Endothelial cell of umbilical vein (primary cell): ENCODE measurements at regions of chr3 and their contacts with region 1.

Region 1: DNA sequence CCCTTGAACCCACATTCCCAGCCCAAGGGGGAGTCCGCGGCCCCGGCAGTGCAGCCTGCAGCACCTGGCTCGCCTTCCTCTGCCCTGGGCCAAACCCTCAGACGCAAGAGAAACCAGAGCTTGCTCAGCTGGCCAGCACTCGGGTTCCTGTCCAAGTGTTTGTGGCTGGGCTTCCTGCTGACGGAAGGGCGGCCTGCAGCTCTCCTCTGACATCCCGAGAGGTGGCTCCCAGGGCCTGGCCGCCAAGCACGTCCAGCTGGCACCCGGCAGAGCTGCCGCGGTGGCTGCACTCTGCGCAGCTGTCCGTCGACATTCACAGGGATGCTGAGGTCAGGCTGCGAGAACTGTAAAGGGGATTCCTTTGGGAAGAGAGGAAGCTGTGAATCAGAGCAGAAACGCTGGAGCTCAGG is 85.6 kb downstream of the CPN2 start:
- DNase-seq: peak; percentile 99
- H3K4me3 ChIP-seq: no peak overlapping the region
- H3K27ac ChIP-seq: peak overlapping the region; percentile 97
- H3K4me1 ChIP-seq: peaks cover 39% of the 10 kb centered on the region
- H3K27me3 ChIP-seq: no peaks in the 10 kb centered on the region
- CTCF ChIP-seq: no peak
- POLR2A ChIP-seq: no peak

Region 2: DNA sequence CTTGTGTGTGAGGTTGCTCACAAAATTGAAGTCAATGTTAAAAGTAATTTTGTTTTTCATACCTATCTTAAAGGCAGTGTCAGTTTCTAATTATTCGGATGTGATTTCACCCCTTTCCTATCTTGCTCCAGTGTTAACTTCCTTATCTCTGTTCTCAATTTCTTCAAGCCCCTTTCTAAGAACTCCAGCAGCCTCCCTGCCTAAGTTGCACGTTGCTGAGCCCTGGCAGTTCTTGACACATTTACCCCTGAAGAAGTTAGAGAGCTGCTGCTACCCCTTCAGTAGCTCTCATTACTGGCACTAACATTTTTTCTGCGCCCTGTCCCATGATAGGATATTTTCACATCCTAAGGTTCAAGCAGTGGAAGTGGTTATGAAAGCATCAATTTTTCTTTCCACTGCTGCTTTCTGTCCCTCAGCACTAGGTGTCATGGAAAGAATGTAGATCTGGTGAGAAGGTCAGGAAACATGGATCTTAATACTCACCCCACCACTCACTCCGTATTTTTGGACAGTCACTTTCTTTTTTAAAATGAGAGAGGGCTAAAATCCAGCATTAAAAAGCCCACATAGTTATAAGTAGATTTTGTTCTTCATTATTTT is 609.6 kb before region 1 on chr3:
- CTCF ChIA-PET with region 1: no interaction called
- POLR2A ChIA-PET with region 1: no interaction called
- dilution Hi-C with region 1: no loop called
- intact Hi-C with region 1: no loop called
- DNase-seq: no peak
- H3K4me3 ChIP-seq: no peak overlapping the region
- H3K27ac ChIP-seq: no peak overlapping the region
- H3K4me1 ChIP-seq: no peaks in the 10 kb centered on the region
- H3K27me3 ChIP-seq: no peaks in the 10 kb centered on the region
- CTCF ChIP-seq: no peak
- POLR2A ChIP-seq: no peak

Region 3: DNA sequence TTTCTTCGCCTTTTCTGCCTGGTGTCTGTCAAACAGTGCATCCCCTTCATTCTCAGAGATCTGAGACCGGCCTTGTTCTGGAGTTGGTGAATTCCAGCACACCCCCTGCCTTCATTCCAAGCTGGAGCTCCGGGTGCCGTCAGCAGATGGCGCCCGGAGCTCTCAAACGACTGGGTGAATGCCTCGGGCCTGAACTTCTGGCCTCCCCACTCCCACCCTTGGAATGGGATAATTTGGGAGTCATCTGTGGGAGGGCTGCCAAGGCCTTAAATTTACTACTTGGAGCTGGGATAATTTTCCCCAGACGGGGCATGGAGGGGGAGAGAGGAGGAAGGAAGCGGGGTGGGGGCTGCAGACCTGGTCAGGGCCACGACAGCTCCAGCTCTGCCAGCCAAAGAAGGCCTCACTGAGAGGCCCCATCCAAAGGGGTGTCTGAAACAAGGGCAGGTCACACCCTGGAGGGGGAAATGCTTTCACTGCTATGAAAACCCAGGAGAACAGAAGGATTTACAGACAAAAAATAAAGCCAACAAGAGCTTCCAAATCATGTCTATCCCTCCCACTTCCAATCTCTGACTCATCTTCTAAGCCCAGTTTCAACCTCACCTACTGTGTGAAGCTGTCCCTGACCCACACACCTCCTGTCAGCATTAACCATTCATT is 484.5 kb before region 1 on chr3:
- CTCF ChIA-PET with region 1: interaction called, 38 read pairs
- POLR2A ChIA-PET with region 1: interaction called, 6 read pairs
- dilution Hi-C with region 1: no loop called
- intact Hi-C with region 1: loop called (anchors 1 kb)
- DNase-seq: peak; percentile 79
- H3K4me3 ChIP-seq: no peak overlapping the region
- H3K27ac ChIP-seq: peak overlapping the region; percentile 65
- H3K4me1 ChIP-seq: peaks cover 18% of the 10 kb centered on the region
- H3K27me3 ChIP-seq: peaks cover 17 to 19% of the 10 kb centered on the region in 2 experiments
- CTCF ChIP-seq: peak; percentile 84 to 88
- POLR2A ChIP-seq: no peak

Region 4: DNA sequence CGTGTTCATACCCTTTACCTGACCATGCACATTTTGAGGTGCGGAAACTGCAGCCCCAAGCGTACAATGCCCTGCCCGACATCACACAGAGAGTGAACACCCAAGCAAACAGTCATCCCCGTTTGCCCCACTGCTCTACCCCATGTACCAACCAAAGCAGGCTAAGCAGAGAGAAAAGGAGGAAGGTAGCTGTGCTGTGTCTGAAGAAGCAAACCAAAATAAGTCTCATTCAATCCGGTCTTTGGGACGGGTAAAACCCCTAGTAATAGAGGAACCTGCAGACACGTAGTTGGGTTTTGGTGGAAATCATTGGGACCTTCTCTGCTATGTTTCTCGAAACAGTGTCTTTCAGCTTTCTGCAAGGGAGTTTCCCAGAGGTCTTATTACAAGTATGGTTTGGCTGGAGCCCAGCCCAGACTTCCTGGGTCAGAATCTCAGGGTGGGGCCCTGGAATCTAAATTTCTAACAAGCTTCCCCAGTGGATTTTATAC is 294.2 kb before region 1 on chr3:
- CTCF ChIA-PET with region 1: interaction called, 6 read pairs
- POLR2A ChIA-PET with region 1: no interaction called
- dilution Hi-C with region 1: no loop called
- intact Hi-C with region 1: loop called (anchors 1 kb)
- DNase-seq: no peak
- H3K4me3 ChIP-seq: no peak overlapping the region
- H3K27ac ChIP-seq: no peak overlapping the region
- H3K4me1 ChIP-seq: peaks cover 20% of the 10 kb centered on the region
- H3K27me3 ChIP-seq: no peaks in the 10 kb centered on the region
- CTCF ChIP-seq: no peak
- POLR2A ChIP-seq: no peak

Region 5: DNA sequence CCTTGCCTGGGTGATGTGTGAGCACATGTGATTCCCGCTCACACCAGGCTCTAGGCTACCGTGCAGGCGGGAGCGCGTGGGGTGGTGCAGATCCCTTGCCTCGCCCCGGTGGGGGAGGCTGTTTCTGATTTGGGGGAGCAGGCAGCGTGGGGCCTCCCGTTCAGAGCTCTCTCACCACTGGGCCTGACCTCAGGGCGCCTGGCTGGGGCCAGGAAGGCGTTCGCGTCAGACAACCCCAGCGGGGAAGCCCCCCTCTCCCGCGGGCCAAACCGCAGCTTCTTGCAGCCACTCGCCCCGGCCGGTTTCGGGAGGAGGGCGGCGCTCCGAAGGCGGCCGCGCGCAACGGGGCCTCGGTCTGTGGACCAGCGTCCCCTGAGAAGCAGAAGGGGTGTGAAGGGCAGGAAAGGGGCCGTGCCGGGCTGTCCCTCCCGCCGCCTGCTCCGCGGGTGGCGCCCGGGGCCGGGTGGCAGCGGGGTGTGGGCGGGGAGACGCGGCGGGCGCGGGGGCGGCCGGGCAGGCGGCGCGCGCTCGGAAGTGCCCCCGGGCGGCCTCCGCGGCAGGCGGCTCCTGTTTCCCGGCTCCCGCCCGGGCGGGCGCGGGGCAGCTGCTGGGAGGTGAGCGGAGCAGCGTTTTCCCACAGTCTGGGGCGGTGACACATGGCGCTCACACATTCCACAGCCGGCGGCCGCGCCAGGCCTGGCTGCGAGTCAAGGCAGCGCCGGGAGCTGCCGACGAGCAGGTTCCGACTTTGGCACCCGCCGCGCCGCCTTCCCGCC is 194.7 kb before region 1 on chr3:
- CTCF ChIA-PET with region 1: interaction called, 4 read pairs
- POLR2A ChIA-PET with region 1: no interaction called
- dilution Hi-C with region 1: no loop called
- intact Hi-C with region 1: loop called (anchors 1 kb)
- DNase-seq: peak; percentile 98
- H3K4me3 ChIP-seq: peak overlapping the region in 2 of 3 experiments; percentile 23
- H3K27ac ChIP-seq: peak overlapping the region; percentile 87
- H3K4me1 ChIP-seq: peaks cover 15% of the 10 kb centered on the region
- H3K27me3 ChIP-seq: no peaks in the 10 kb centered on the region
- CTCF ChIP-seq: no peak
- POLR2A ChIP-seq: peak; percentile 45

Region 6: GRCh38 chr3:194141415-194142155 is 123.9 kb before region 1 on chr3:
- CTCF ChIA-PET with region 1: interaction called, 86 read pairs
- POLR2A ChIA-PET with region 1: interaction called, 16 read pairs
- dilution Hi-C with region 1: no loop called
- intact Hi-C with region 1: loop called (anchors 1 kb)
- DNase-seq: peak; percentile 93
- H3K4me3 ChIP-seq: no peak overlapping the region
- H3K27ac ChIP-seq: peak overlapping the region; percentile 99
- H3K4me1 ChIP-seq: peaks cover 40% of the 10 kb centered on the region
- H3K27me3 ChIP-seq: no peaks in the 10 kb centered on the region
- CTCF ChIP-seq: peak in 1 of 2 donors; percentile 14
- POLR2A ChIP-seq: no peak

Region 7: GRCh38 chr3:194204042-194204987 is 61.2 kb before region 1 on chr3:
- CTCF ChIA-PET with region 1: interaction called, 6 read pairs
- POLR2A ChIA-PET with region 1: interaction called, 4 read pairs
- dilution Hi-C with region 1: no loop called
- intact Hi-C with region 1: loop called (anchors 1 kb)
- DNase-seq: no peak
- H3K4me3 ChIP-seq: peak overlapping the region; percentile 22 to 31 (median 28)
- H3K27ac ChIP-seq: no peak overlapping the region
- H3K4me1 ChIP-seq: peaks cover 17% of the 10 kb centered on the region
- H3K27me3 ChIP-seq: no peaks in the 10 kb centered on the region
- CTCF ChIP-seq: no peak
- POLR2A ChIP-seq: no peak

Region 8: DNA sequence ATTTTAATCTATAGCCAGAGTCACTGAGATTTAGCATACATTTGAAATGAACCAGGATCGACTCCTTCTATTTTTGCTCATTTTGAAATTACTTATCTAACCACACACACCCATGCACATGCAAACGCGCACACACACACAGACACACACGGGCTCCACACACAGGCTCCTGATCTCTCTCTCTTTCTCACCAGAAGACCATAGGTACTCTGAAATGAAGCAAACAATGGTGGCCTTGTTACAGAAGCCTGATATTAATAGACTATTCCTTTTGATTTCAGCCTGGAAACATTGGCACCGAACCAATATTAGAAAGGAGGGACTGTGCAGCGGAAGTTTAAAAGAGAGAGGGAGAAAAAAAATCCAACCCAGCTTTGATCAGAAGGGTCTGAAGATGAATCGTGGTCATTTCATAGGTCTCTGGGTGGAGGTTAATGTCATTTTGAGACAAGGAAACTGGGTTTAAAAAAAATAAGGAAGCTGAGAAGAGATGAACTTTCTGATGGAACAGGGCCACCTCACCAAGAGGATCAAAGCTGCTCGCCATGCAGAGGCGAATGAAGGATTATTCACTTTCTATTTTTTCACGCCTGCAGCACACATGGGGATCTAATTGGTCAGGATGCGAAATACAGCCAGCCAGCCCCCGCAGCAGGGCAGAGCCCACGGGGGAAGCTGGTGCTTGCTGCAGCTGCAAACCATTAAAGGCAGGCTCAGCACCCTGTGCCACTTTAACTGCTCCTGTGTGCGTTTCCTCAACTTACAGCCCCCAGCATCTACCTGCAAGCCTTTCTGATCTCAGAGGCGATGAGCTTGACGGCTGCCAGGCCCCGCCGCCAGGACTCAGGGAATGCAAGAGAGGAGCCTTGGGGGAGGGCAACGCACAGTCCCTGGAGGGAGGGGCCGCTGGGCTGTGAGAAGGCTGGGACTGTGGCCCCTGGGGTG is 40.7 kb before region 1 on chr3:
- CTCF ChIA-PET with region 1: no interaction called
- POLR2A ChIA-PET with region 1: no interaction called
- dilution Hi-C with region 1: no loop called
- intact Hi-C with region 1: no loop called
- DNase-seq: no peak
- H3K4me3 ChIP-seq: no peak overlapping the region
- H3K27ac ChIP-seq: no peak overlapping the region
- H3K4me1 ChIP-seq: no peaks in the 10 kb centered on the region
- H3K27me3 ChIP-seq: peaks cover 10 to 11% of the 10 kb centered on the region in 2 experiments
- CTCF ChIP-seq: no peak
- POLR2A ChIP-seq: no peak

Region 9: GRCh38 chr3:194306109-194306686 is 40.7 kb after region 1 on chr3:
- CTCF ChIA-PET with region 1: interaction called, 25 read pairs
- POLR2A ChIA-PET with region 1: interaction called, 5 read pairs
- dilution Hi-C with region 1: no loop called
- intact Hi-C with region 1: loop called (anchors 1 kb)
- DNase-seq: peak; percentile 89
- H3K4me3 ChIP-seq: no peak overlapping the region
- H3K27ac ChIP-seq: no peak overlapping the region
- H3K4me1 ChIP-seq: peaks cover 14% of the 10 kb centered on the region
- H3K27me3 ChIP-seq: peaks cover 2% of the 10 kb centered on the region in 2 experiments
- CTCF ChIP-seq: no peak
- POLR2A ChIP-seq: no peak

Region 10: GRCh38 chr3:194439881-194440550 is 174.5 kb after region 1 on chr3:
- CTCF ChIA-PET with region 1: no interaction called
- POLR2A ChIA-PET with region 1: no interaction called
- dilution Hi-C with region 1: no loop called
- intact Hi-C with region 1: no loop called
- DNase-seq: no peak
- H3K4me3 ChIP-seq: no peak overlapping the region
- H3K27ac ChIP-seq: no peak overlapping the region
- H3K4me1 ChIP-seq: no peaks in the 10 kb centered on the region
- H3K27me3 ChIP-seq: no peaks in the 10 kb centered on the region
- CTCF ChIP-seq: no peak
- POLR2A ChIP-seq: no peak

Region 11: DNA sequence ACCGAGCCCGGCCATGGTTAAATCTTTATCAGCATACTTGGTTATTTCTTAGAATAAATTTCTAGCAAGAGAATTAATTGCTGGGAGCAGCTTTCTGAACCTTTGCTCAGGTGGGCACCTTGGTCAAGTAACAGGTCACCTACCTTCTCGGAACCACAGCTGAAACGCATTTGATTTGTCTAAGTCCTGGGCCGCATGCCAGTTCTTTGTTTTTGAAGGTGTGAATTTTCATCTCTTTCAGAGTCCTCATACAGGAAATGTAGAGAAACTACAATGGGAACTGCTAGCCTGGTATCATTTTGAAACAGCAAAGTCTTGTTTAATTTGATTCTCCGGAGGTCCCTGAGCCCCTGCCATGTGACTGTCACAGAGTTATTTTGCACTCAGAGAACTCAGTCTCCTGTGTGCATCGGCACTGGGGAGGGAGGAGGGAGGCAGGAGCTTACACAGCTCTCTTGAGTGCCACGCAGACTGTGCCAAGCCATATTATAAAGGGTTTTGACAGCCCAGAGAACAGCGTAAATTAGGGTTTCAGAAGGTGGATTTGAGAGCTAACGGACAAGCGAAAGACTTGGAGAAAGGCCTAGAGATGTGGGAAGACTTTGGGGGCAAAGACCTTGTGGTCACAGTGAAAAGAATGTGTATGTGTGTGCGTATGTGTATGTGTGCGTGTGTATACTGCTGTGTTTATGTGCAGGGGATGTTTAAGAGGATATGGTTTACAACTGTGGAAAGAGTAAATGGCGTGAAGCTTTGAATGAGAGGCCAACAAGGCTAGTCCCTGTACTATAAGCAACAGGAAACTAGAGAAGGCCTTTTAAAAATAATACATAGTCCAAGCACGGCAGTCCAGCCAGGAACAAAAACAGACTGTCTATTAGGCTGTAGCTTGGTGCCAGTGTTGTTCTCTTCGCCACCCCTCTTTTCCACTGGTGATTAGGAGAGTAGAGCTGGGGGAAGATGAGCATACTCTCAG is 283.1 kb after region 1 on chr3:
- CTCF ChIA-PET with region 1: no interaction called
- POLR2A ChIA-PET with region 1: no interaction called
- dilution Hi-C with region 1: no loop called
- intact Hi-C with region 1: no loop called
- DNase-seq: peak; percentile 86
- H3K4me3 ChIP-seq: no peak overlapping the region
- H3K27ac ChIP-seq: no peak overlapping the region
- H3K4me1 ChIP-seq: peaks cover 7% of the 10 kb centered on the region
- H3K27me3 ChIP-seq: no peaks in the 10 kb centered on the region
- CTCF ChIP-seq: no peak
- POLR2A ChIP-seq: no peak